Aorta (tissue), 5 donors: ENCODE measurements at regions of chr22 and their contacts with region 1.

Region 1: DNA sequence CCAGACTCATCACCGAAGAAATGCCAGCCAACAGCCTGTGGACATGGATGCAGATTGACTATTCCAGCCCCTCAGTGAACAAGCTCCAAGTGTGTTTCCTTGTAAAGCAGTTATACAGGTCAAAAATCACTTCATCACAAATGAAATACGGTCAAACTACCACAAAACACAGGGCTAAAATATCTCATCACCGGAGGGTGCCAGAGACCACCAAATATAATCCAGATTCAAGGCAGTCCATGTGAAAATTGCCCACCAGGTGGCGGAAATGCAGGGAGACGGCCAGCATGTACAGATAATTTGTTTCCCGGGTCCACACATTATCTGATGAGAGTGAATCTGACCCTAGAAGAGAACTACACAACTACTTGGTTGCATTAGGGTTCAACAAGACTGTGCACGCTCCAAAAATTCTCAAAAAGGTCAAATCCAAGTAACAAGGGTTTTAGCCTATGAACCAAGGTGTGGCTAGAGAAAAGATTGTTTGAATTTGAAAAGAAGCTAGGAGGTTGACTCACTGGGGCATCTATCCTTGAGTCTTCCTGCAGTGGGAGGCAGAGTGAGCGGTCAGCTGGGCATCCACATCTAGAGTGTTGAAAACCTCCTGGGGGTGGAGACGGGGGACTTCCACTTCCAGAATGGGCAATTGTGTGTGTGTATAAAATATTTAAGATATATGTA is 71.7 kb downstream of the IGLL5 start:
- DNase-seq: peak; percentile 78 to 86
- ATAC-seq: no peak
- H3K4me3 ChIP-seq: no peak overlapping the region
- H3K27ac ChIP-seq: no peak overlapping the region
- H3K4me1 ChIP-seq: no peaks in the 10 kb centered on the region
- H3K27me3 ChIP-seq: no peaks in the 10 kb centered on the region

Region 2: GRCh38 chr22:22848364-22848866 is 110.9 kb before region 1 on chr22:
- intact Hi-C with region 1: loop called (anchors 5 kb)
- DNase-seq: peak; percentile 64 to 82
- ATAC-seq: peak; percentile 56
- H3K4me3 ChIP-seq: no peak overlapping the region
- H3K27ac ChIP-seq: no peak overlapping the region
- H3K4me1 ChIP-seq: no peaks in the 10 kb centered on the region
- H3K27me3 ChIP-seq: no peaks in the 10 kb centered on the region

Region 3: DNA sequence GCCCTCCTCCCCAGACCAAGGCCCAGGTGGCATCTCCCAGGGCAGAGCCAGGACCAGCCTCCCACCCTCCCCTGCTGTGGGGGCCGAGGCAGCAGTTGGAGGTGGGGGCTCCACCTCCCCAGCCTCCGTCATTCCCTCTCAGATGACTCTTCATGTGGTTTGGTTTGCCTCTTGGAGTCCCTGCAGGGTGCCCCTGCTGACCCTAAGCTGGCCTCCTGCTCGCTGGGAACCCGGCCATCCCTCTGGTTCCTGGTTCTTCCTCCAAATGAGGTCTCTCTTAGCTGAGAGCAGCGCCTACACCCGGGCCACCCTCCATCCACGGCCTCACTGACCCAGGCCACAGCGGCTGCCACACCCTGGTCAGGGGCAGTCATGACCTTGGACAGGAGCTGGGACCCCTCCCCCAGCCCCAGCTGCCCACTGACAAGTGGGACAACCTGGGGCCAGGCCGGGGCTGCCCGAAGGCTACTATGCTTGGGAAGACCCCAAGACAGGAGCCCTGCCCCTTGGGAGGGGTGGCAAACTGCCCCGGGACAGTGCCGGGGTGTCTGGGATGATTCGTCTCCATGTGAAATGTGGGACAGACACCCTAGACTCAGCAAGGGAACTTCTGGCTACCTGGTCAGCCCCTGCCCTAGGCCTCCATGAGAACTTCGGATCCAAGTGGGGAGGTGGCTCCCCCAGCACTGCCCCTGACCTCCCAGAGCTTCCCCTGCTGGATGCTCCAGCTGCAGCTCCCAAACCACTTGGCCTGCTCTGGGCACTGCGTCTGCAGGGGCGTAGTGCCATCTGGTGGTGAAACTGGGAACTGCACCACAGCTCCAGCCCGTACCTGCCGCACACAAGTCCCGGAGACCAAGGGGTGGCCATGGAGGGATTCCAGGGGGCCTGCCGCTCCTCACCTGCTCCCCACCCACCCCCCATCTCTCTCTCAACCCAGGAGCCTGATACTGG is 426.3 kb after region 1 on chr22:
- intact Hi-C with region 1: loop called (anchors 2 to 10 kb)
- DNase-seq: peak; percentile 86 to 94
- ATAC-seq: peak; percentile 88
- H3K4me3 ChIP-seq: no peak overlapping the region
- H3K27ac ChIP-seq: no peak overlapping the region
- H3K4me1 ChIP-seq: no peaks in the 10 kb centered on the region
- H3K27me3 ChIP-seq: no peaks in the 10 kb centered on the region